B cell (primary cell): ENCODE measurements at regions of chr5 and their contacts with region 1.

Region 1: GRCh38 chr5:42879291-42879690 is 67.6 kb upstream of the SELENOP start:
- DNase-seq: no peak
- ATAC-seq: no peak
- H3K4me3 ChIP-seq: no peak overlapping the region
- H3K4me3 Mint-ChIP-seq: no peak overlapping the region
- H3K27ac ChIP-seq: no peak overlapping the region
- H3K27ac Mint-ChIP-seq: no peak overlapping the region
- H3K4me1 ChIP-seq: peaks cover 0 to 3% of the 10 kb centered on the region in 2 donors
- H3K4me1 Mint-ChIP-seq: peaks cover 6% of the 10 kb centered on the region
- H3K27me3 ChIP-seq: no peaks in the 10 kb centered on the region
- H3K27me3 Mint-ChIP-seq: no peaks in the 10 kb centered on the region
- CTCF ChIP-seq: no peak

Region 2: DNA sequence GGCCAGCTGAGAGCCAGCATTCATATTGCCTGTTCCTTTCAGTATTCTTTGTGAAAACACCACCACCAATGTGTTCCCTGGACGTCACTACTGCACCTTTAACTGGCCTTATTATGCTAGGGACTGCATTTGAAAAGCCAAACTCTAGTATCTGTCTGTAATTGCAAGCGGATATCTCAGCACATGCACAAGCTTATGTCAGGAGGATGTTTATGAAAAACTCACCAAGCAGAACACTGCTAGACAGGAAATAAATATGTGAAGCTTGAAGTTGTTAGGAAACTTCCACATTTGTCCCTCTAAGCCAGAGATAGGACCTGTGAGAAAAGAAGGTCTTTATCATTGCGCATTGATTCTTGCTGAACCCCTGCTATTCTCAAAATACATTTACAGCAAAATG is 258.0 kb before region 1 on chr5:
- CTCF ChIA-PET with region 1: no interaction called
- POLR2A ChIA-PET with region 1: no interaction called
- intact Hi-C with region 1: no loop called
- DNase-seq: peak; percentile 74
- ATAC-seq: peak; percentile 94
- H3K4me3 ChIP-seq: peak overlapping the region in 1 of 5 experiments; percentile 26
- H3K4me3 Mint-ChIP-seq: peak overlapping the region; percentile 62
- H3K27ac ChIP-seq: peak overlapping the region; percentile 93 to 97
- H3K27ac Mint-ChIP-seq: peak overlapping the region; percentile 94
- H3K4me1 ChIP-seq: peaks cover 40 to 43% of the 10 kb centered on the region in 2 donors
- H3K4me1 Mint-ChIP-seq: peaks cover 50% of the 10 kb centered on the region
- H3K27me3 ChIP-seq: no peaks in the 10 kb centered on the region
- H3K27me3 Mint-ChIP-seq: peaks cover under 1% of the 10 kb centered on the region
- CTCF ChIP-seq: no peak

Region 3: GRCh38 chr5:42636425-42636824 is 242.9 kb before region 1 on chr5:
- CTCF ChIA-PET with region 1: no interaction called
- POLR2A ChIA-PET with region 1: no interaction called
- intact Hi-C with region 1: no loop called
- DNase-seq: peak; percentile 19
- ATAC-seq: no peak
- H3K4me3 ChIP-seq: no peak overlapping the region
- H3K4me3 Mint-ChIP-seq: no peak overlapping the region
- H3K27ac ChIP-seq: no peak overlapping the region
- H3K27ac Mint-ChIP-seq: no peak overlapping the region
- H3K4me1 ChIP-seq: no peaks in the 10 kb centered on the region
- H3K4me1 Mint-ChIP-seq: peaks cover 2% of the 10 kb centered on the region
- H3K27me3 ChIP-seq: no peaks in the 10 kb centered on the region
- H3K27me3 Mint-ChIP-seq: peaks cover 11% of the 10 kb centered on the region
- CTCF ChIP-seq: peak; percentile 27

Region 4: DNA sequence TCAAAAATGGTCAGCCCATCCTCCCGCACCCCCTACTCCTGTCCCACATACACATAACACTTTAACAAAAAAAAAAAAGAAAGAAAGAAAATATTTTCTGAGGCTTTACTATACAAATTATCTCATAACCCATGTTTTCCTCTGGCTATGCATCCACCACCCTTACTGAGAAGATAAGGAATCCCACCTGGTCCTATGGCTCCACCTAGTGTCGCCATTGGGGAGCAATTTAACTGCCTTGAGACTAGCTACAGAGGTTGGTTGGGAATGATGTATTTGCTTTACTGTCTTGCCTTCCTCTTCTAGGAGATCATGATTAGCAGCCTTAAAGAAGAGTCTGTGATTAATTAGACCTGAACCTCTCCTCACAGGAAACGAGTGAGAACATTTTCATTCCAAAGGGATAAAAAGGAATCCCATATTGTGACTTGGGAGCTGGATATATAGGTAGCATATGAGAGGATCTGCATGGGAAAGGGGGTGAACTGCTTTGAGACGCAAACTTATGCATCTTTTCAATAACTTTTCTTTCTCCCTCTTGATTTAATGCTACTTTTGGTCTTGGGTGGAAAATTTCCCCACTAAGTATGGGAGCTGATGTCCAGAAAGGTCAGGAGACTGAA is 10.1 kb after region 1 on chr5:
- CTCF ChIA-PET with region 1: interaction called, 11 read pairs
- POLR2A ChIA-PET with region 1: no interaction called
- intact Hi-C with region 1: no loop called
- DNase-seq: peak; percentile 68
- ATAC-seq: peak; percentile 64
- H3K4me3 ChIP-seq: no peak overlapping the region
- H3K4me3 Mint-ChIP-seq: no peak overlapping the region
- H3K27ac ChIP-seq: no peak overlapping the region
- H3K27ac Mint-ChIP-seq: no peak overlapping the region
- H3K4me1 ChIP-seq: no peaks in the 10 kb centered on the region
- H3K4me1 Mint-ChIP-seq: no peaks in the 10 kb centered on the region
- H3K27me3 ChIP-seq: no peaks in the 10 kb centered on the region
- H3K27me3 Mint-ChIP-seq: peaks cover 22% of the 10 kb centered on the region
- CTCF ChIP-seq: peak; percentile 94

Region 5: GRCh38 chr5:42915306-42915866 is 36.1 kb after region 1 on chr5:
- CTCF ChIA-PET with region 1: no interaction called
- POLR2A ChIA-PET with region 1: no interaction called
- intact Hi-C with region 1: no loop called
- DNase-seq: no peak
- ATAC-seq: no peak
- H3K4me3 ChIP-seq: no peak overlapping the region
- H3K4me3 Mint-ChIP-seq: no peak overlapping the region
- H3K27ac ChIP-seq: no peak overlapping the region
- H3K27ac Mint-ChIP-seq: no peak overlapping the region
- H3K4me1 ChIP-seq: no peaks in the 10 kb centered on the region
- H3K4me1 Mint-ChIP-seq: no peaks in the 10 kb centered on the region
- H3K27me3 ChIP-seq: no peaks in the 10 kb centered on the region
- H3K27me3 Mint-ChIP-seq: no peaks in the 10 kb centered on the region
- CTCF ChIP-seq: no peak